ENCODE measurements at regions of chr22 and their contacts with region 1.

Region 1: DNA sequence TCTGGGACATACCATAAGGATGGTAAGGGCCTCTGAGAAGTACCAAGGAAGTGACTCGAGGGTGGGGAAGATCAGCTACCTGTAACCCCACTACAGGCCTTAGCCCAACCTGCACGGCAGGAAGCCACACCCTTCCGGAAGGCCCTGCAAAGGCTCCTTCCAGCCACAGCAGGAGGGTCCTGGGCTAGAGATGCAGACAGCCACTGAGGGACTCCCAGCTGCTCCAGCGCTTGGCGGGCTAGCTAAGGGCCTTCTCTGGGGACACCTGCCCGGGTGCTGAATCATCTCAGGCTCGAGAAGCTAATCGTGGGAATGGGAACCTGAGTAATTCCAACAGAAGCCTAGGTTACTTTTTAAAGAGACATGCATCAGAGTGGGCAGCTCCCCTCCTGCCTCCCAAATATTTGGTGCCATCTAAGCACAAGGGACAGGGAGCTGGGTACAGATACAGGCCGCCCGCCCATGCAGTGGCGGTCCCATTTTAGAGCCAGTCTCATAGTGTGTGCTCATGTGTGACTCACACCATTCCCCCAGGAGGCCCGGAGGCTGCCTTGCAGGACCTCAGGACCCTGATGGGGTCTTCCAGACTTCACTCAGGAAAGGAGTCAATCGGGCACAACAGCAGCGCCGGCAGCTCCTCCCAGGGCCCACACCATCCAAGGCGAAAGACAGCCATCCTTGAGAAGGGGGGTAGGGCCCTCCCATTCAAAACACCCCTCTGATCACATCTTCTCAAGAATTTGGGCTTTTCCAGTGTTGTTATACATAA is 8.0 kb downstream of the MYH9 start:
- DNase-seq: peak; percentile 74
- H3K4me3 Mint-ChIP-seq: peak overlapping the region; percentile 76
- H3K27ac Mint-ChIP-seq: peak overlapping the region; percentile 97
- H3K4me1 Mint-ChIP-seq: peaks cover 91% of the 10 kb centered on the region
- H3K27me3 Mint-ChIP-seq: no peaks in the 10 kb centered on the region

Region 2: GRCh38 chr22:36359181-36359996 is 20.4 kb before region 1 on chr22:
- CTCF ChIA-PET with region 1: interaction called, 16 read pairs
- POLR2A ChIA-PET with region 1: interaction called, 5 read pairs
- DNase-seq: no peak
- H3K4me3 Mint-ChIP-seq: peak overlapping the region; percentile 27
- H3K27ac Mint-ChIP-seq: peak overlapping the region; percentile 82
- H3K4me1 Mint-ChIP-seq: peaks cover 97% of the 10 kb centered on the region
- H3K27me3 Mint-ChIP-seq: no peaks in the 10 kb centered on the region

Region 3: DNA sequence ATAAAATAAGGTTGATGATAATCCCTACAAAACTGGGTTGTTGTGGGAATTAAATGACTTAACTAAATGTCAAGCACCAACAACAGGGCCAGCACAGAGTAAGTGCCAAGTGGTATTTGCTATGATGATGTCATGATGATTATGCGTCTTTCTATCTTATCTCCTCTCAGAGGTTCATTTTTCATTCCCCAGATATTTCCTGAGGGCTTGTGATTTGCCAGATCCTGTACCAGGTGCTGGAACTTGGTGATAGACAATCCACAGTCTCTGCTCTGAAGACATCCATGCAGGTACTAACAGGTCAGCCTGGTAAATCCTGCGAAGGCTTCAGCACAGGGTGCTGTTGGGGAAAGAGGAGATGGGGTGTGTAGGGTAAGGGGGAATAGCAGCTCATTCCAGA is 16.1 kb after region 1 on chr22:
- CTCF ChIA-PET with region 1: no interaction called
- POLR2A ChIA-PET with region 1: no interaction called
- DNase-seq: no peak
- H3K4me3 Mint-ChIP-seq: no peak overlapping the region
- H3K27ac Mint-ChIP-seq: no peak overlapping the region
- H3K4me1 Mint-ChIP-seq: peaks cover 38% of the 10 kb centered on the region
- H3K27me3 Mint-ChIP-seq: no peaks in the 10 kb centered on the region

Region 4: GRCh38 chr22:36595940-36596339 is 216.2 kb after region 1 on chr22:
- CTCF ChIA-PET with region 1: no interaction called
- POLR2A ChIA-PET with region 1: no interaction called
- DNase-seq: no peak
- H3K4me3 Mint-ChIP-seq: no peak overlapping the region
- H3K27ac Mint-ChIP-seq: no peak overlapping the region
- H3K4me1 Mint-ChIP-seq: no peaks in the 10 kb centered on the region
- H3K27me3 Mint-ChIP-seq: peaks cover 6% of the 10 kb centered on the region

Region 5: GRCh38 chr22:36658900-36659299 is 279.1 kb after region 1 on chr22:
- CTCF ChIA-PET with region 1: no interaction called
- POLR2A ChIA-PET with region 1: no interaction called
- DNase-seq: no peak
- H3K4me3 Mint-ChIP-seq: no peak overlapping the region
- H3K27ac Mint-ChIP-seq: no peak overlapping the region
- H3K4me1 Mint-ChIP-seq: no peaks in the 10 kb centered on the region
- H3K27me3 Mint-ChIP-seq: peaks cover 24% of the 10 kb centered on the region

Region 6: GRCh38 chr22:36684841-36685240 is 305.1 kb after region 1 on chr22:
- CTCF ChIA-PET with region 1: no interaction called
- POLR2A ChIA-PET with region 1: no interaction called
- DNase-seq: no peak
- H3K4me3 Mint-ChIP-seq: no peak overlapping the region
- H3K27ac Mint-ChIP-seq: no peak overlapping the region
- H3K4me1 Mint-ChIP-seq: no peaks in the 10 kb centered on the region
- H3K27me3 Mint-ChIP-seq: peaks cover 25% of the 10 kb centered on the region

Measured in activated CD4-positive, alpha-beta T cell treated with anti-CD3 and anti-CD28 coated beads, Interleukin-2, amount 10 ng/mL, durations not matched to agents 7 days and 5 days (primary cell).